ENCODE measurements at regions of chr1 and their contacts with region 1.

Region 1: GRCh38 chr1:10082785-10083479 is 50.2 kb downstream of the UBE4B start:
- DNase-seq: no peak
- H3K4me3 ChIP-seq: no peak overlapping the region
- H3K27ac ChIP-seq: no peak overlapping the region
- H3K4me1 ChIP-seq: no peaks in the 10 kb centered on the region
- H3K27me3 ChIP-seq: no peaks in the 10 kb centered on the region
- CTCF ChIP-seq: no peak
- POLR2A ChIP-seq: no peak

Region 2: DNA sequence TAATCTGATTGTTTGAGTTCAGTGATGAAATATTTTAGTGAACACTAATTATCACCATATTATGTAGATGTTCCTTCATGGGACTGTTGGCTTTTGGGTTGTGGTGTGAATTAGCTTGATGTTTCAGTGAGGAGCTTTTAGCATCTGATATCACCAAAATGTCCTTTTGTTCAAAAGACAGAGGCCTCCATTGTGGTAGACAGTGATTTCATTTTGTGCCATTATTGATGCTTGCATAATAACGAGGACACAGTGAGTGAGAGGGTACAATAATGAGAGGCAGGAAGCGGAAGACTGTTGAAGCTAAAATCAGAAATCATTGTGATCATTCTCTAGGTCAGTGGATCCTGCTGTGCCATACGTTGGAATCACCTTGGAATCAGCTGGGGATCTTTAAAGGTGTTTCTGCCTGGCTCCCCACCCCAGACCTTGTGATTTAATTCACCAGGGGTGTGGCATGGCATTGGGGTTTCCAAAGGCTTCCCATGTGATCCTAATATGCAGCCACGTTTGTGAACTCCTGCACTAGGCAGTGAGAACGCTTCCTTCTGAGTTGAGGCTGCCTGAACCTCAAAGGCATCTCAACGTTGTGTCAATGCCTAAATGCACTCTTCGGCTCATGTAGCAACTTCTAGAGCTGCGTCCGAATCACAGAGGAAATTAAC is 45.3 kb after region 1 on chr1:
- intact Hi-C with region 1: no loop called
- DNase-seq: no peak
- H3K4me3 ChIP-seq: no peak overlapping the region
- H3K27ac ChIP-seq: no peak overlapping the region
- H3K4me1 ChIP-seq: no peaks in the 10 kb centered on the region
- H3K27me3 ChIP-seq: no peaks in the 10 kb centered on the region
- CTCF ChIP-seq: no peak
- POLR2A ChIP-seq: no peak

Region 3: DNA sequence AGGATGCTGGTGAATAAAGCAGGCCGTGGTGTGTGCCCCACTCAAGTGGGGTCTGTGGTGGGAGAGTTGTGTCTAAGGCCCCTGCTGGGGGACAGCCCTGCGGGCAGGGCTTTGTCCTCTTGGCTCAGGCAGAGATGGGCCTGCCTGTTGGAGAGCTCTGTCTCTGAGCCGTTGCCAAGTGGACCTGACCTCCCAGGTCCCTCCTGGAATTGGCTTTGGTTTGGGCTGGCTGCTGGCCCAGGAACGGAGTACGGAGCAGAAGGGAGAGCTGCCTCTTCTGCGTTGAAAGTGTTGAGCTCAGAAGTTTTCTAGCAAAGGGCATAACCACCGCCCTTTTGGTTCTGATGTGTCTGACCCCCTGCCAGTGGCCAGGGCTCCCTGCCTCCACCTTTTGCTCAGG is 545.8 kb after region 1 on chr1:
- intact Hi-C with region 1: loop called (anchors 5 kb)
- DNase-seq: peak; percentile 64 to 82
- H3K4me3 ChIP-seq: no peak overlapping the region
- H3K27ac ChIP-seq: peak overlapping the region; percentile 79 to 84
- H3K4me1 ChIP-seq: peaks cover 0 to 18% of the 10 kb centered on the region in 2 donors
- H3K27me3 ChIP-seq: no peaks in the 10 kb centered on the region
- CTCF ChIP-seq: no peak
- POLR2A ChIP-seq: no peak

Region 4: DNA sequence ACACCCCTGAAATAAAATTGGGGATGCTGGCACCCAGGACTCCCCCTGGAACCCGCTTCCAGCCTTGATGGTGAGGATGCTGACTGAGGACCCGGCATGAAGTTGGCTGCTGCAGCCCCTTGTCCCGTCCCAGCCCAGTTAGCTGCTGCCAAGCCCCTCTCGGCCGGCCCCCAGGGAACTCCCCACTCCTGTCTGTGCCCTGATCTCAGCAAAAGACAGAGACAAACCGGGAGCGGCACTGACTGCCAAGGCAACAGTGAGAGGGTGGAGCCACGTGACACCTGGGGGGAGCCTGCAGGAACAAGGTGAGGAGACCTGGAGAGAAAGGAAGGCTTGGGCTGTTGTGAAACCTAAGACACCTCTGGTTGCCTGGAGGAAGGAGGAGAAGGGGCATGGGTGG is 688.9 kb after region 1 on chr1:
- intact Hi-C with region 1: loop called (anchors 5 kb)
- DNase-seq: no peak
- H3K4me3 ChIP-seq: no peak overlapping the region
- H3K27ac ChIP-seq: no peak overlapping the region
- H3K4me1 ChIP-seq: peaks cover 0 to 12% of the 10 kb centered on the region in 2 donors
- H3K27me3 ChIP-seq: no peaks in the 10 kb centered on the region
- CTCF ChIP-seq: no peak
- POLR2A ChIP-seq: no peak

Measured in breast epithelium (tissue), 4 donors.